Gastrocnemius medialis (tissue), 4 donors: ENCODE measurements at regions of chr22 and their contacts with region 1.

Region 1: GRCh38 chr22:35330258-35330861 is 30.7 kb downstream of the TOM1 start:
- DNase-seq: peak; percentile 88 to 94
- ATAC-seq: peak; percentile 72 to 86
- H3K4me3 ChIP-seq: no peak overlapping the region
- H3K27ac ChIP-seq: peak overlapping the region; percentile 83 to 98 (median 92)
- H3K4me1 ChIP-seq: peaks cover 7 to 14% of the 10 kb centered on the region in 2 donors
- H3K27me3 ChIP-seq: no peaks in the 10 kb centered on the region
- CTCF ChIP-seq: no peak
- POLR2A ChIP-seq: peak; percentile 54 to 55

Region 2: DNA sequence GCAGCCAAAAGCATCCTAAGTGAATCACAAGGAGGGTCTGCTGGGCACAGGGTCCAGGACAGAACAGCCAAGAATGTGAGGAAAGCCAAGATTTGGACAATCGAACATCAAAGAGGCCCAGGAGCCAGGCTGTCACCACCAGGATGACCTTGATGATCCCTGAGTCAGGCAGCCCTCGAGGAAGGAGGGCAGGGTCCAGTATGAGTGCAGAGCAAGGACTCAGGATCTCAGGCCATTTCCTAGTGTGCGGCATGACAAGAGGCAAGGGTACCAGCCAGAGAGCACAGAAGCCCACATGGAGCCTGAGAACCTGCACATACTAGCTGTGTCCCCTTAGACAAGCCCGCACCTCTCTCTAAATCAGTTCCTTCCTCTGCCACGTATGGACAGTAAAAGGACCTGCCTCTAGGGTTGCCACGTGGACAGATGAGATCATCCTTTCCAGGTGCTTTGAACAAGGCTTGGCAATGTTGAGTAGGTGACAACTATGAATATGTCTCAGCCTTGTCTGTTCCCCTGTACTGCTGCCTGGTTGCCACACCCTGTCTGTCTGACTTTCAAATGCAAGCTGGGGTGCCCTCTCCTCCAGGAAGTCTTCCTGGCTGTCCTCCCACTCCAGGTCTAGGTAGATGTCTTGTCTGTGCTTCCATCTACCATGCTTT is 296.6 kb before region 1 on chr22:
- in situ Hi-C with region 1: no loop called
- intact Hi-C with region 1: no loop called
- DNase-seq: no peak
- ATAC-seq: no peak
- H3K4me3 ChIP-seq: no peak overlapping the region
- H3K27ac ChIP-seq: no peak overlapping the region
- H3K4me1 ChIP-seq: no peaks in the 10 kb centered on the region
- H3K27me3 ChIP-seq: peaks cover 0 to 4% (median 2%) of the 10 kb centered on the region in 3 donors
- CTCF ChIP-seq: no peak
- POLR2A ChIP-seq: no peak

Region 3: DNA sequence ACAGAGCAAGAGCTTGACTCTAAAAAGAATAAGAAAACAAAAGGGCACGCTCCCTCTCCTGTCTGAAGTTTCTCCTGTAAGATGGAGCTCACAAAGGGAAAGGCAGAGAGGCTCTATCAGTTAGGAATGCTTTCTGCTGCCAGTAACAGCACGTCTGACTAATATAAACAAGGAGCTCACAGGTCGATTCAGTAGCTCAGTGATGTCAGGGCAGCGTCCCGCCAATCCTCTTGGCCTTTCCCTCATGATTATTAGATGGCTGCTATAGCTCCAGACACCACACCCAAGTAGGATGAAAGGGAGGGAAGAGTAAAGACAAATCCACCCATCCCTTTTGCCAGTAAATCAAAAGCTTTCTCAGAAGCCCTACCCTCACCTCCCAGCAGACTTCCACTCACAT is 124.4 kb before region 1 on chr22:
- in situ Hi-C with region 1: no loop called
- intact Hi-C with region 1: no loop called
- DNase-seq: no peak
- ATAC-seq: no peak
- H3K4me3 ChIP-seq: no peak overlapping the region
- H3K27ac ChIP-seq: no peak overlapping the region
- H3K4me1 ChIP-seq: no peaks in the 10 kb centered on the region
- H3K27me3 ChIP-seq: peaks cover 7 to 17% (median 10%) of the 10 kb centered on the region in 3 donors
- CTCF ChIP-seq: no peak
- POLR2A ChIP-seq: no peak

Region 4: GRCh38 chr22:35257321-35258190 is 72.8 kb before region 1 on chr22 and contains the start of gene HMGXB4:
- in situ Hi-C with region 1: no loop called
- intact Hi-C with region 1: loop called (anchors 1 kb)
- DNase-seq: peak; percentile 69 to 79
- ATAC-seq: peak; percentile 95 to 96
- H3K4me3 ChIP-seq: peak within 1 kb of the TSS; percentile 83 to 98 (median 90)
- H3K27ac ChIP-seq: peak within 1 kb of the TSS; percentile 83 to 99 (median 97)
- H3K4me1 ChIP-seq: peaks cover 15 to 18% of the 10 kb centered on the region in 2 donors
- H3K27me3 ChIP-seq: no peaks in the 10 kb centered on the region
- CTCF ChIP-seq: peak in 1 of 5 experiments; percentile 39
- POLR2A ChIP-seq: peak in 1 of 2 donors; percentile 8
- total RNA-seq, gene HMGXB4: 8.3 to 19.2 (median 12.4) TPM

Region 5: DNA sequence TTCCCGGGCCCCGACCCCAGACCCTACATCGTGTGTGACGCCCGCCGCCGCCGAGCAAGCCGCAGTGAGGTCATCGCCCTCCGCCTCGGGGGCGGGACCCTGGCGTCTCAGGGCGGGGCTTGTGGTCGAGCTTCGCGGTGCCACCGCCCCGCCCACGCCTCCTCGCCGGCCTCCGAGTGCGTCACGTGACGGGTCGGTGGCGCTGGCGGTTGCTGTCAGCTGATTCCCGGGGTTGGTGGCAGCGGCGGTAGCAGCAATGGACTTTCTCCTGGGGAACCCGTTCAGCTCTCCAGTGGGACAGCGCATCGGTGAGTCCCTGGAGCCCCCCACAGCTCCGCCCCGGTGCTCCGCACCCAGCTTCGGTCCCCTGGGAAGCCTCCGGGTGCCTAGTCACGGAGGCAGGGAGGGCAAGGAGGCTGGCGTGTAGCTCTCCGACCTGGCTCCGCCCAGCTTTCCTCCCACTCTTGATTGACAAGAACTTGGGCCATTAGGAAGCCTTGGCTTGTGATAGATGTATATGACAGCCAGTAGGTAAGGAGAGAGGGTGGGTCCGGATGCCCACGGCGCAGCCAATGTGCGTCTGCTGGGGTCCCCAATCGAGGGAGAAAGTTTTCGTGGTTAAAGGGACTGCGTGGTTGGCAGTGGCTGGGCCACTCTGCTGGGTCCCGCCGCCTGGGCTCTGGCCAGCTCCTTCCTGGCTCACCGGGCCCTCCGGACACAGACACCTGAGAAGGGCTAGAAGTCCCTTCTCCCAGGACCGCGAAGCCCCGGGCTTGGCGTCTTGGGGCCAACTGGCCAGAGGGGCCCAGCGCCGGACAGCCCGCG is 30.5 kb before region 1 on chr22 and contains the start of gene TOM1:
- in situ Hi-C with region 1: no loop called
- intact Hi-C with region 1: loop called (anchors 1 kb)
- DNase-seq: peak; percentile 96 to 98
- ATAC-seq: peak; percentile 87 to 91
- H3K4me3 ChIP-seq: peak within 1 kb of the TSS; percentile 80 to 86 (median 82)
- H3K27ac ChIP-seq: peak within 1 kb of the TSS; percentile 98 to 99 (median 98)
- H3K4me1 ChIP-seq: peaks cover 37 to 39% of the 10 kb centered on the region in 2 donors
- H3K27me3 ChIP-seq: no peaks in the 10 kb centered on the region
- CTCF ChIP-seq: peak in 1 of 5 experiments; percentile 36
- POLR2A ChIP-seq: peak; percentile 98
- total RNA-seq, gene TOM1: 363 to 609 (median 425) TPM